Aorta (tissue), 5 donors: ENCODE measurements at regions of chr7 and their contacts with region 1.

Region 1: DNA sequence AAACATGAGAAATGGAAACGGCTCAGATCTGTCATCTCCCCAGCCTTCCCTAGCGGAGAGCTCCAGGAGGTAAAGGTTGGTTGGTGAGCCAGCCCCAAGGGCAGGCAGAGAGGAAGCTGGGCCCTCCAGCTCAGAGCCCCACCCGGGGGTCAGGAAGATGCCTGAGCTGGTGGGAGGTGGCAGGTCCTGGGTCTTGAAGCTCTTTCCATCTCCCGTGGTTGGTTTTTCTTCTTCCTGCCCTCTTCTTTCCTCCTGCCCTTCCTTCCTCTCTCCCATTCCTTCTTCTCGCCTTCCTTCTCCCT is 384.2 kb upstream of the FOXK1 start:
- DNase-seq: no peak
- ATAC-seq: no peak
- H3K4me3 ChIP-seq: no peak overlapping the region
- H3K27ac ChIP-seq: no peak overlapping the region
- H3K4me1 ChIP-seq: no peaks in the 10 kb centered on the region
- H3K27me3 ChIP-seq: no peaks in the 10 kb centered on the region

Region 2: DNA sequence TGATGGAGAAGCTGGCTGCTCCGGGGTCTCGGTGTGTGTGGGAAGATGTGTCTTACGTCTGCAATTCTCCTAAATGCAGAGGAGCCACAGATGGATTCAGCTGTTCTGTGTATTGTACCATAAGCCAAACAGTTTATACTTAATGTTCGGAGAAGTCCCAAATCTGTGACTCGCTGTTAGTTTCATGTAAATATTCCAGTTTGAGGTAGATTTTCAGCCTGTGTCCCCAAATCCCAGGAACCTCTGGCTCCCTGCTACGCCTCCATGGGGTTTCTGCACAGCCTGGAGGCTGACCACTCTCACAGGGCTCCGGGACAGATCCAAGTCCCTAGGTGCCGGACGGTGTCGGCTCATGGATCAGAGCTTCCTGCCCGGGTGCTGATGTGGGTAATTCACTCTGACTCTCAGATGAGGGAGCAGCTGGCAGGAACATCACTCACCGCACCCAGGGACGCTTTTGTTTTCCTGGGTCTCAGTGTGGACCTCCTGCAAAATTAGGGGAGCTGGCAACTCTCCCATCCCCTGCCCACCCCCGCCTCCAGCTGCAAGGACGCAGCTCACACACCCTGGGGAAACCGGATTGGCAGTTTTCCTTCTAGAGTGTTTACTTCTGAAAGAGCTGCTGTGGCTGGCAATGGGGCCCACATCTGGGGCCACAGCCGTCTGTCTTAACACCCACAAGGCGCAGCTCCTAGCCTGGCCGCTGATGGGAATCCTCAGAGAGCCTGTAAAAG is 36.8 kb before region 1 on chr7:
- intact Hi-C with region 1: loop called in 1 of 2 experiments (anchors 2 kb)
- DNase-seq: no peak
- ATAC-seq: no peak
- H3K4me3 ChIP-seq: no peak overlapping the region
- H3K27ac ChIP-seq: no peak overlapping the region
- H3K4me1 ChIP-seq: no peaks in the 10 kb centered on the region
- H3K27me3 ChIP-seq: no peaks in the 10 kb centered on the region

Region 3: DNA sequence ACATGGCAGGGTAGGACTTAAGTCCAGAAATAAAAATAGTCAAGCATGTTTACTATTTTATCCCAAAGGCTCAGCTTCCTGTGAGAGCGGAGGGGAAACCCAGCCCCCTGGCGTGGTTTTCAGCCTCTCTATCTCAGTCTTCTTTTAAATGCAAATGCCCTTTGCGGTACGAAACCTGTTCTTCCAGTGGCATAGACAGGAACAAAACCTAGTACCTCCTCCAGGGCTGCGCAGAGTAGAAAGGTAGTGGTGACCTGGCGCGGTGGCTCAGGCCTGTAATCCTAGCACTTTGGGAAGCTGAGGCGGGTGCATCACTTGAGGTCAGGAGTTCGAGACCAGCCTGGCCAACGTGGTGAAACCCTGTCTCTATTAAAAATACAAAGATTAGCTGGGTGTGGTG is 202.9 kb after region 1 on chr7:
- intact Hi-C with region 1: no loop called
- DNase-seq: no peak
- ATAC-seq: no peak
- H3K4me3 ChIP-seq: no peak overlapping the region
- H3K27ac ChIP-seq: no peak overlapping the region
- H3K4me1 ChIP-seq: no peaks in the 10 kb centered on the region
- H3K27me3 ChIP-seq: no peaks in the 10 kb centered on the region